Activated CD4-positive, alpha-beta T cell treated with anti-CD3 and anti-CD28 coated beads, Interleukin-2, amount 10 ng/mL, durations not matched to agents 7 days and 5 days (primary cell): ENCODE measurements at regions of chr9 and their contacts with region 1.

Region 1: DNA sequence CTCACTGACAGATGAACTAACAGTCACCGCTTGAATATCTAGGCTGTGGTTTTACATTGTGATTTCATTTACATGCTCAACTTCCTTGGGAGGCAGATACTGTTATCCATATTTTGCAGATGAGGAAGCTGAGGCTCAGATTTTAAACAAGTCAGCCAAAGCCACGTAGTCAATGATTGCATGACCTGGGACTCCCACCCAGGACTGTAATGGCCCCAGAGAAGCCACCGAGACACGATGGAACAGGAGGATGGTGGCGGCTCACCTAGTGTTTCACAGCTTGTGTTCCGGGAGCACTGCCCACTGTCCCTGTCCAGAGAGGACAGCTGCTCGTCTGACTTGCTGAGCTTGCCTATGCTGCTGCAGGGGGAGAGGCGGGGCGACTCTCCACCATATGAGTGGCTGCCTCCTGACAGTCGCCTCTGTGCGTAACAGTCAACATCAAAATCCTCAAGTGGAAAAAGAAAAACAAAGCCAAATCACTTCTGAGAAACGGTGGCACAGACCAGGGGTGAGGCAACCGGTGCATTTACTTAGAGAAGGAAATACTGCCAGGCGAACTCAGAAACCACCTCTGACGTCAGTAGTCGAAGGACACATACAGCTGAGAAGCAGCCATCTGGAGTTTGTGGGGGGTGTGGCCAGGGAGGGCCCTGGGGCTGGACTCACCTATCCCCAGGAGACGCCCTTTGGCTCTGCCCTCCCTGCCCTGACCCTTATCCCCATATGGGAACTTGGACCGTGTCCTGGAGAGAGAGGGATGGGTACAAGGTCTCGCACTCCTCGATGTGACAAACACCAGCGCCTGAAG is 82.5 kb downstream of the PRRT1B start:
- DNase-seq: peak; percentile 69
- H3K4me3 Mint-ChIP-seq: peak overlapping the region; percentile 30
- H3K27ac Mint-ChIP-seq: peak overlapping the region; percentile 88
- H3K4me1 Mint-ChIP-seq: peaks cover 53% of the 10 kb centered on the region
- H3K27me3 Mint-ChIP-seq: no peaks in the 10 kb centered on the region

Region 2: GRCh38 chr9:131567910-131568309 is 59.9 kb before region 1 on chr9:
- CTCF ChIA-PET with region 1: no interaction called
- POLR2A ChIA-PET with region 1: no interaction called
- DNase-seq: no peak
- H3K4me3 Mint-ChIP-seq: no peak overlapping the region
- H3K27ac Mint-ChIP-seq: no peak overlapping the region
- H3K4me1 Mint-ChIP-seq: peaks cover 8% of the 10 kb centered on the region
- H3K27me3 Mint-ChIP-seq: no peaks in the 10 kb centered on the region

Region 3: GRCh38 chr9:131641618-131642495 is 14.0 kb after region 1 on chr9:
- CTCF ChIA-PET with region 1: interaction called, 14 read pairs
- POLR2A ChIA-PET with region 1: no interaction called
- DNase-seq: no peak
- H3K4me3 Mint-ChIP-seq: no peak overlapping the region
- H3K27ac Mint-ChIP-seq: peak overlapping the region; percentile 92
- H3K4me1 Mint-ChIP-seq: peaks cover 40% of the 10 kb centered on the region
- H3K27me3 Mint-ChIP-seq: no peaks in the 10 kb centered on the region